Endothelial cell of umbilical vein (primary cell): ENCODE measurements at regions of chr12 and their contacts with region 1.

Region 1: GRCh38 chr12:26832822-26833742 is at the start of gene ITPR2:
- DNase-seq: peak; percentile 89
- H3K4me3 ChIP-seq: peak within 1 kb of the TSS; percentile 72 to 91 (median 78)
- H3K27ac ChIP-seq: peak within 1 kb of the TSS; percentile 96
- H3K4me1 ChIP-seq: peaks cover 23% of the 10 kb centered on the region
- H3K27me3 ChIP-seq: no peaks in the 10 kb centered on the region
- CTCF ChIP-seq: peak in 1 of 2 donors; percentile 12
- POLR2A ChIP-seq: peak; percentile 91
- total RNA-seq, gene ITPR2: 86.8 and 88.5 TPM in 2 replicates

Region 2: DNA sequence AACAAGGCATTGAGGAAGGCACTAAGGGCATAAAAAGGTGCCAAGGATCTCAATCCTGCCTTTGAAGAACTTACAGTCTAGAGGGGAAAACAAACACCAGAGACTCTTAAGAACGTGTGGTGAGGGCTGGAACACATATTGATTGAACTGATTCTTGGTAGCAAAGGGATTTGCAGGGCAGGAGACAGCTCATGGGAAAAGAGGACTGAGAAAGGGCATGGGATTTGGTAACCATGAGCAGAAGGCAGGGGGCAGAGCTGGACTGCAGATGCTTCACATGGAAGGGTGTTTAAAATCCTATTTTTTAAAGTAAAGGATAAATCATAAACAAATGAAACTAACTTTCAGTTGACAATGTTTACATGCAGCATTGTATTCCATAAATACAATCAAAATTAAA is 203.2 kb before region 1 on chr12:
- CTCF ChIA-PET with region 1: interaction called, 18 read pairs
- POLR2A ChIA-PET with region 1: no interaction called
- dilution Hi-C with region 1: no loop called
- intact Hi-C with region 1: no loop called
- DNase-seq: peak; percentile 61
- H3K4me3 ChIP-seq: peak overlapping the region in 1 of 3 experiments; percentile 31
- H3K27ac ChIP-seq: peak overlapping the region; percentile 78
- H3K4me1 ChIP-seq: peaks cover 32% of the 10 kb centered on the region
- H3K27me3 ChIP-seq: no peaks in the 10 kb centered on the region
- CTCF ChIP-seq: peak; percentile 27 to 32
- POLR2A ChIP-seq: no peak

Region 3: GRCh38 chr12:26732005-26732908 is 100.8 kb before region 1 on chr12:
- CTCF ChIA-PET with region 1: interaction called, 12 read pairs
- POLR2A ChIA-PET with region 1: interaction called, 8 read pairs
- dilution Hi-C with region 1: no loop called
- intact Hi-C with region 1: no loop called
- DNase-seq: no peak
- H3K4me3 ChIP-seq: no peak overlapping the region
- H3K27ac ChIP-seq: no peak overlapping the region
- H3K4me1 ChIP-seq: peaks cover 37% of the 10 kb centered on the region
- H3K27me3 ChIP-seq: no peaks in the 10 kb centered on the region
- CTCF ChIP-seq: no peak
- POLR2A ChIP-seq: no peak

Region 4: DNA sequence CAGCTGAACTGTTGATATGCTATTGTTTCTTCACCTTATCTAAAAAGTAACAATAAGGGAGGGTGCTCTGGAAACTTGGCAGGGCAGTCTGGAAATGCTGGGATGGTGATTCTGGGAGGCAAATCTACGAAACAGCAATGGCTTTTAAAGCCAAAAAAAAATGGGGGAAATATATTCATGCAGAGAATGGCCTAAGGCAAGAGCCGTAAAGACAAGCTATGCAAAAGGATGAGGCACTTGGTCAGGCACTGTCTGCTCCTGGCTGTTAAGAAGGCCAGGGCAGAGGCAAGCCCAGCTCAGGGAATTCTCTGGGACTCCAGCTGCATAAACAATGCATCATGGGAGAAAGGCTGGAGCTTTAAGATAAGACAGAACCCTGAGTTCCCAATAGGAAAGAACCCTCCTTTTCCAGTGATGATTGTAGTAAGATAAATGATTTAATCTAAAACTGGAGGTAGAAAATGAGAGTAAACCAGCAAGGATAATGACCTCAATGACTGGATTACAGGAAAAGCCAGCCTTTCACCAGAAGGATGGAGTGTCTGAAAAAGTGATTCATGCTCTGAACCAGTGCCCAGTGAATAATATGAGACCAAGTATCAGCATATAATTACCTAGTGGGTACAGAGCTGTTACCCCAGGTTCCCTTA is 46.1 kb before region 1 on chr12:
- CTCF ChIA-PET with region 1: interaction called, 10 read pairs
- POLR2A ChIA-PET with region 1: interaction called, 10 read pairs
- dilution Hi-C with region 1: no loop called
- intact Hi-C with region 1: loop called (anchors 2 kb)
- DNase-seq: peak; percentile 96
- H3K4me3 ChIP-seq: no peak overlapping the region
- H3K27ac ChIP-seq: peak overlapping the region; percentile 85
- H3K4me1 ChIP-seq: peaks cover 39% of the 10 kb centered on the region
- H3K27me3 ChIP-seq: no peaks in the 10 kb centered on the region
- CTCF ChIP-seq: no peak
- POLR2A ChIP-seq: no peak

Region 5: GRCh38 chr12:26845057-26845666 is 12.1 kb after region 1 on chr12:
- CTCF ChIA-PET with region 1: interaction called, 47 read pairs
- POLR2A ChIA-PET with region 1: interaction called, 3 read pairs
- dilution Hi-C with region 1: no loop called
- intact Hi-C with region 1: loop called (anchors 1 kb)
- DNase-seq: peak; percentile 65
- H3K4me3 ChIP-seq: no peak overlapping the region
- H3K27ac ChIP-seq: no peak overlapping the region
- H3K4me1 ChIP-seq: peaks cover 15% of the 10 kb centered on the region
- H3K27me3 ChIP-seq: no peaks in the 10 kb centered on the region
- CTCF ChIP-seq: peak; percentile 65 to 66
- POLR2A ChIP-seq: no peak

Region 6: GRCh38 chr12:26878661-26879119 is 45.6 kb after region 1 on chr12:
- CTCF ChIA-PET with region 1: interaction called, 11 read pairs
- POLR2A ChIA-PET with region 1: interaction called, 4 read pairs
- dilution Hi-C with region 1: no loop called
- intact Hi-C with region 1: no loop called
- DNase-seq: peak; percentile 93
- H3K4me3 ChIP-seq: no peak overlapping the region
- H3K27ac ChIP-seq: no peak overlapping the region
- H3K4me1 ChIP-seq: peaks cover 9% of the 10 kb centered on the region
- H3K27me3 ChIP-seq: no peaks in the 10 kb centered on the region
- CTCF ChIP-seq: no peak
- POLR2A ChIP-seq: no peak